Activated CD4-positive, alpha-beta T cell treated with anti-CD3 and anti-CD28 coated beads for 36 hours (primary cell): ENCODE measurements at regions of chr5 and their contacts with region 1.

Region 1: DNA sequence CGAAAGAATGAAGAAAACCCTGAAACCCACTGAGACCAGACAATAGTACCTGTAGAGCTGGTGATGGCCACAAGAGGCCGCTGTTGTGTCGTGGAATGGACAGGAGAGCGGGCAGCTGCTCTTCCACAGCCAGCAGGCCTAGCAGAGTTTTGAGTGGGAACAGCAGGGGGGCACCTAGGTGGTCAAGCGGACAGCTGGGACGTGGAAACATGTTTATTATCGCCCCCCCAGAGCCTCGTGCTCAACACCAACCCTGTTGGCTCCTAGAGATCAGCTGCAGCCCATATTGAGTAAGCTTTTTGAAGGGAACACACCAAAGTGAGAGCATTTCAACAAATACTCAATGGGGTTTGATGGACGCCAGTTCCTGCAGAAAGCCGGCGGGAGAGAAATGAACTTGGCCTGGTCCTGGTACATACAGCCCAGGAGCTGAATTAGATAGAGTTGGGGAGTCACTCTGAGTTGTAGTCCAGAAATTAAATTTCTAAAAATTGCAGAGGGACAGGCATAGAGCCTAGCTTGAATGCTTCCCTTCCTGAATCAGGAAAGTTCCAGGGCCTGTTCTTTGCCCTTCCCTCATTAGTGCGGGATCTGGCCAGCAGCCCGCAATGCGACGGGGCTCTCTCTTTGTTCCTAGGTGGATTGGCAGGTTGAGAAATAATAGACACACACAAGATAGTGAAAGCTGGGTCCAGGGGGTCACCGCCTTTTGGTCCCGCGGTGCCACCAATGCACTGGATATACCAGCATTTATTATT is 33.8 kb downstream of the MFAP3 start:
- DNase-seq: peak; percentile 92
- ATAC-seq: peak; percentile 83
- H3K4me3 Mint-ChIP-seq: no peak overlapping the region
- H3K27ac Mint-ChIP-seq: no peak overlapping the region
- H3K4me1 Mint-ChIP-seq: peaks cover 21% of the 10 kb centered on the region
- H3K27me3 Mint-ChIP-seq: no peaks in the 10 kb centered on the region

Region 2: GRCh38 chr5:153974131-153974812 is 98.3 kb before region 1 on chr5:
- CTCF ChIA-PET with region 1: interaction called, 13 read pairs
- POLR2A ChIA-PET with region 1: no interaction called
- intact Hi-C with region 1: loop called in 1 of 2 experiments (anchors 2 kb)
- DNase-seq: peak; percentile 50
- ATAC-seq: peak; percentile 55
- H3K4me3 Mint-ChIP-seq: no peak overlapping the region
- H3K27ac Mint-ChIP-seq: no peak overlapping the region
- H3K4me1 Mint-ChIP-seq: no peaks in the 10 kb centered on the region
- H3K27me3 Mint-ChIP-seq: no peaks in the 10 kb centered on the region

Region 3: GRCh38 chr5:154058055-154059038 is 14.2 kb before region 1 on chr5:
- CTCF ChIA-PET with region 1: interaction called, 10 read pairs
- POLR2A ChIA-PET with region 1: no interaction called
- intact Hi-C with region 1: no loop called
- DNase-seq: no peak
- ATAC-seq: no peak
- H3K4me3 Mint-ChIP-seq: no peak overlapping the region
- H3K27ac Mint-ChIP-seq: no peak overlapping the region
- H3K4me1 Mint-ChIP-seq: peaks cover 4% of the 10 kb centered on the region
- H3K27me3 Mint-ChIP-seq: no peaks in the 10 kb centered on the region

Region 4: DNA sequence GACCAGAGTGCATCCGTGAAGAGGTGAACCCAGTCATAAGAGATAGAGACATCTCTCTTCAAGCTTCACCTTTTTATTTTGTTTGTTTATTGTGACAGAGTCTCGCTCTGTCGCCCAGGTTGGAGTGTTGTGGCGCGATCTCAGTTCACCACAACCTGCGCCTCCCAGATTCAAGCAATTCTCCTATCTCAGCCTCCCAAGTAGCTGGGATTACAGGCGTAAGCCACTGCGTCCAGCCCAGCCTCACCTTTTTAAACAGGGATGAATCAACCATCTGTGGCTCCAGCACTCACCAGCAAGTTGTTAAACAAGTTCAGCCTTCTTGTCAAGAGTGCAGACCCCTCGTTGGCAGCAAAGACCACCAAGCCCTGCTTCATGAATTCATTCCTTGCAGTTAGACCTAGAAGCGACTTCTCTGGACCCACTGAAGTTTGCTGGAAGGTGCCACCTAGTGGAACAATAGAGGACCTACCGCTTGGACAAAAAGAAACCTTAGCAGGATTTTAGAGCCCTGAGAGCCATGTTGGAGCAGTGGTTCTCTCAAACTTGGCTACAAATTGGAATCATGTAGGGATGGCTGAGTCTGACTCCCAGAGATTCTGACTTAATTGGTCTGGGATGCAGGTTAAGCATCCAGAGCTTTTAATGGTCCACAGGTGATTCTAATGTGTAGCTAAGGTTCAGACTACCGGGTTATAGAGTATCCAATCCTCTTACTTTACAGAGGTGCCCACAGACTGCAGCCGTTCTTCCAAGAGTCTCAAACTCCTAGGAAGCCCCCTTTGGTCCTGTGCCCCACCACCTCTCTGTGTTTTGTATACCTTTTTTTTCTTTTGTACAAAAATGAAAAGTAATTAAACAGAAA is 107.5 kb after region 1 on chr5:
- CTCF ChIA-PET with region 1: interaction called, 37 read pairs
- POLR2A ChIA-PET with region 1: no interaction called
- intact Hi-C with region 1: loop called (anchors 1 kb)
- DNase-seq: peak; percentile 46
- ATAC-seq: peak; percentile 98
- H3K4me3 Mint-ChIP-seq: no peak overlapping the region
- H3K27ac Mint-ChIP-seq: no peak overlapping the region
- H3K4me1 Mint-ChIP-seq: no peaks in the 10 kb centered on the region
- H3K27me3 Mint-ChIP-seq: peaks cover 7% of the 10 kb centered on the region

Region 5: GRCh38 chr5:154236536-154237375 is 164.2 kb after region 1 on chr5:
- CTCF ChIA-PET with region 1: interaction called, 5 read pairs
- POLR2A ChIA-PET with region 1: no interaction called
- intact Hi-C with region 1: loop called in 1 of 2 experiments (anchors 1 kb)
- DNase-seq: peak; percentile 50
- ATAC-seq: peak; percentile 44
- H3K4me3 Mint-ChIP-seq: no peak overlapping the region
- H3K27ac Mint-ChIP-seq: no peak overlapping the region
- H3K4me1 Mint-ChIP-seq: peaks cover 33% of the 10 kb centered on the region
- H3K27me3 Mint-ChIP-seq: no peaks in the 10 kb centered on the region

Region 6: DNA sequence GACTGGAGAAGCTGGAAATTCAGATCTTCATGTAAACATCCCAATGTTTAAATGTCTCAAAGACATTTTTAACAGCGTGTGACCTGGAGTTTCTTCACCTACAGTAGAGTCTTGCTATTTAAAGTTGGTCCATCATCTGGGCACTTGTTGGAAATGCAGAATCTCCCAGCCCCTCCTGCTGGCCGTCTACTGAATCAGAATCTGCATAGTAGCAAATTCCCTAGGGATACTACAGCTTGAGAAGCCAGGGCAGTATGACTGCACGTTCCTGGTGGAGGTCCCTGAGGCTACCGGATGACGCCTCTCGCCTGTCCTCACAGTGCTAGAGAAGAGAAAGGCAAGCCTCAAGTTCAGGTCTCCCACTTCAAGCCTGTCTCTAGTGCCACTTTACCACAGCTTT is 388.9 kb after region 1 on chr5:
- CTCF ChIA-PET with region 1: interaction called, 15 read pairs
- POLR2A ChIA-PET with region 1: no interaction called
- intact Hi-C with region 1: no loop called
- DNase-seq: no peak
- ATAC-seq: no peak
- H3K4me3 Mint-ChIP-seq: no peak overlapping the region
- H3K27ac Mint-ChIP-seq: no peak overlapping the region
- H3K4me1 Mint-ChIP-seq: no peaks in the 10 kb centered on the region
- H3K27me3 Mint-ChIP-seq: no peaks in the 10 kb centered on the region

Region 7: GRCh38 chr5:154868702-154869101 is 796.1 kb after region 1 on chr5:
- CTCF ChIA-PET with region 1: no interaction called
- POLR2A ChIA-PET with region 1: no interaction called
- intact Hi-C with region 1: no loop called
- DNase-seq: peak; percentile 13
- ATAC-seq: no peak
- H3K4me3 Mint-ChIP-seq: no peak overlapping the region
- H3K27ac Mint-ChIP-seq: peak overlapping the region; percentile 2
- H3K4me1 Mint-ChIP-seq: peaks cover 24% of the 10 kb centered on the region
- H3K27me3 Mint-ChIP-seq: no peaks in the 10 kb centered on the region